Panc1 (cell line): ENCODE measurements at regions of chr17 and their contacts with region 1.

Region 1: DNA sequence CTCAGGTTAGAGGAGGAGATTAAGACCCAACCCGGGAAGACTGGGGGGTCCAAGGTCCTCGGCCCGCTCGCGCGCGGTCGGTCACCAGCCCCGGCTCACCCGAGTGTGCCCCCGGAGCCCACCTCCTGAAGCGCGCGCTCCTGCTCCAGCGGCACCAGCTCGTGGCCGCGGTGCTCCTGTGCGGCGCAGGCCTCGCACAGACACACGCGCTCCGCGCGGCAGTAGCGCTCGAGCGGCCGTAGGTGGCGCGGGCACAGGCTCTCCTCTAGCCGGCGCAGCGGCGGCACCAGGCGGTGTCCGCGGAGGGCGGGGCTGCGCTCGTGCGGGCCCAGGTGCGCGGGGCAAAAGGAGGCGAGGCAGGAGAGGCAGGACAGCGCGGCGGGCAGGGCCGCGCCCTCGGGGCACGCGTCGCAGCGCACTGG is 618 bp downstream of the TRIM47 start:
- DNase-seq: no peak
- ATAC-seq: peak; percentile 70
- H3K4me3 ChIP-seq: peak overlapping the region; percentile 76 to 82
- H3K27ac ChIP-seq: peak overlapping the region; percentile 88
- H3K4me1 ChIP-seq: peaks cover 28% of the 10 kb centered on the region
- H3K27me3 ChIP-seq: no peaks in the 10 kb centered on the region
- CTCF ChIP-seq: no peak; the same call in 1 of the 2 replicates

Region 2: GRCh38 chr17:75779231-75779986 is 98.4 kb before region 1 on chr17:
- CTCF ChIA-PET with region 1: interaction called, 7 read pairs
- POLR2A ChIA-PET with region 1: interaction called, 10 read pairs
- in situ Hi-C with region 1: no loop called
- intact Hi-C with region 1: no loop called
- DNase-seq: peak; percentile 97
- ATAC-seq: peak; percentile 80
- H3K4me3 ChIP-seq: peak overlapping the region; percentile 94 to 95
- H3K27ac ChIP-seq: peak overlapping the region; percentile 92
- H3K4me1 ChIP-seq: peaks cover 39% of the 10 kb centered on the region
- H3K27me3 ChIP-seq: no peaks in the 10 kb centered on the region
- CTCF ChIP-seq: peak; percentile 59; the same call in 1 of the 2 replicates

Region 3: GRCh38 chr17:75927286-75927922 is 49.6 kb after region 1 on chr17:
- CTCF ChIA-PET with region 1: no interaction called
- POLR2A ChIA-PET with region 1: no interaction called
- in situ Hi-C with region 1: no loop called
- intact Hi-C with region 1: no loop called
- DNase-seq: no peak
- ATAC-seq: peak; percentile 75
- H3K4me3 ChIP-seq: no peak overlapping the region
- H3K27ac ChIP-seq: no peak overlapping the region
- H3K4me1 ChIP-seq: no peaks in the 10 kb centered on the region
- H3K27me3 ChIP-seq: no peaks in the 10 kb centered on the region
- CTCF ChIP-seq: no peak

Region 4: GRCh38 chr17:76063875-76064546 is 186.2 kb after region 1 on chr17:
- CTCF ChIA-PET with region 1: no interaction called
- POLR2A ChIA-PET with region 1: no interaction called
- in situ Hi-C with region 1: no loop called
- intact Hi-C with region 1: no loop called
- DNase-seq: no peak
- ATAC-seq: no peak
- H3K4me3 ChIP-seq: no peak overlapping the region
- H3K27ac ChIP-seq: no peak overlapping the region
- H3K4me1 ChIP-seq: no peaks in the 10 kb centered on the region
- H3K27me3 ChIP-seq: no peaks in the 10 kb centered on the region
- CTCF ChIP-seq: no peak

Region 5: GRCh38 chr17:76103274-76104139 is 225.7 kb after region 1 on chr17 and contains the start of gene EXOC7:
- CTCF ChIA-PET with region 1: no interaction called
- POLR2A ChIA-PET with region 1: no interaction called
- in situ Hi-C with region 1: no loop called
- intact Hi-C with region 1: no loop called
- DNase-seq: peak; percentile 58
- ATAC-seq: peak; percentile 95
- H3K4me3 ChIP-seq: peak within 1 kb of the TSS; percentile 79 to 87
- H3K27ac ChIP-seq: peak within 1 kb of the TSS; percentile 95
- H3K4me1 ChIP-seq: peaks cover 14% of the 10 kb centered on the region
- H3K27me3 ChIP-seq: no peaks in the 10 kb centered on the region
- CTCF ChIP-seq: no peak
- total RNA-seq, gene EXOC7: 190 TPM